Dendritic cell treated with granulocyte-macrophage colony-stimulating factor and Interleukin-4, amounts not matched to agents 40 ng/mL and 50 ng/mL, for 4 days (primary cell): ENCODE measurements at regions of chr4 and their contacts with region 1.

Region 1: DNA sequence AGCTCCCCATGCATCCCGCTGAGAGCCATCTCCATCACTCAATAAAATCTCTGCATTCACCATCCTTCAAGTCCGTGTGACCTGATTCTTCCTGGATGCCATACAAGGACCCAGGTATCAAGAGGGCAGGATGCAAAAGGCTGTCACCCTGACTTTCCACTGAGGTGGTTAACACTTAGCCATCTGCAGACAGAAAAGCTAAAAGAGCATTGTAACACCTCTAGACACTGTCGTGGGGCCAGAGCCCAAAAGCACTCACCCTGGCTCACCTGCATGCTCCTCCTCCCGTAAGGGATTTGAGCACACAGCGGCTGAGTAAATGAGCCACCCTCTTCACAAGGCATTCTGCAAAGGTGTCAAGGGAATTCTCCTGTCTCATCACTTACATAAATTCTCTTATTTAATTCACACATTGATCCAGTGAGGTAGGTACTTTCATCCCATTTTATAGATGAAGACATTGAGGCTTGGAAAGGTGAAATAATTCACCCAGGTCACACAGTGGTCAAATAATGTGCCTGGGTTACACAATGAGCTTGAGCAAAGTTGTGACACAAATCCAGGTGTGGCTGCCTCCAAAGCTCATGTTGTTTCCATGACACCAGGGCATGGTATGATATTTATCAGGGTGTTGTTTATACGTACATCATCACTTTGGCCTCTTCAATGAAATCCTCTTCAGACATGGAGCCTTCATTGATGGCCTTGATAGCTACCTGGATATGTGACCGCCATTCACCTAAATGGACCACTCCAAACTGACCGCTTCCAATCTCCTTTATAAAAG is 48.0 kb downstream of the TXK start:
- H3K4me3 Mint-ChIP-seq: no peak overlapping the region
- H3K27ac Mint-ChIP-seq: no peak overlapping the region
- H3K4me1 Mint-ChIP-seq: no peaks in the 10 kb centered on the region
- H3K27me3 Mint-ChIP-seq: peaks cover 4% of the 10 kb centered on the region

Region 2: GRCh38 chr4:48008021-48008596 is 77.9 kb before region 1 on chr4:
- intact Hi-C with region 1: loop called (anchors 1 kb)
- H3K4me3 Mint-ChIP-seq: no peak overlapping the region
- H3K27ac Mint-ChIP-seq: no peak overlapping the region
- H3K4me1 Mint-ChIP-seq: peaks cover 8% of the 10 kb centered on the region
- H3K27me3 Mint-ChIP-seq: peaks cover 5% of the 10 kb centered on the region

Region 3: DNA sequence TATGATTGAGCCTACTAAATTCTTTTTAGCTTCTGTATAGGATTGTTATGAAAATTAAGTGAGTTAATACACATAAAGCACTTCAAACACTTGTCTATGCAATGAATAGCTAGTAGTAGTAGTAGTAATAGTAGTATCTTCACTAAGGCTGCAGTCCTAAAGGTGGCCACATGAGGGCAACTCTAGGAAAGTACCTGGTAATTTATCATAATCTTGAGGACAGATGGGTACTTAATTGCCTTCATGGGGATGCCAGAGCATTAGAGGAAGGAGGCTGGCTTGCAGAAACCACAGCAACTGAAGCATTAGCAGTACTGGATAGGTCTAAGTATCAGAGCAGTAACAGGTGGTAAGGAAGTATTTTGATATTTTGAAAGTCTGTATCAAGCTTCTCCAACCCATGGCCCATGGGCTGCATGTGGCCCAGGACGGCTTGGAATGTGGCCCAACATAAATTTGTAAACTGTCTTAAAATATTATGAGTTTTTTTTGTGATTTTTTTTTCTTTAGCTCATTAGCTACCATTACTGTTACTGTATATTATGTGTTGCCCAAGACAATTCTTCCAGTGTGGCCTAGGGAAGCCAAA is 52.1 kb before region 1 on chr4:
- intact Hi-C with region 1: loop called (anchors 5 kb)
- H3K4me3 Mint-ChIP-seq: no peak overlapping the region
- H3K27ac Mint-ChIP-seq: no peak overlapping the region
- H3K4me1 Mint-ChIP-seq: peaks cover 14% of the 10 kb centered on the region
- H3K27me3 Mint-ChIP-seq: peaks cover 11% of the 10 kb centered on the region